ENCODE measurements at regions of chr18 and their contacts with region 1.

Region 1: GRCh38 chr18:44733069-44733753 is 52.5 kb downstream of the SETBP1 start:
- DNase-seq: no peak
- H3K4me3 Mint-ChIP-seq: peak overlapping the region; percentile 26
- H3K27ac Mint-ChIP-seq: peak overlapping the region; percentile 67
- H3K4me1 Mint-ChIP-seq: peaks cover 81% of the 10 kb centered on the region
- H3K27me3 Mint-ChIP-seq: no peaks in the 10 kb centered on the region

Region 2: DNA sequence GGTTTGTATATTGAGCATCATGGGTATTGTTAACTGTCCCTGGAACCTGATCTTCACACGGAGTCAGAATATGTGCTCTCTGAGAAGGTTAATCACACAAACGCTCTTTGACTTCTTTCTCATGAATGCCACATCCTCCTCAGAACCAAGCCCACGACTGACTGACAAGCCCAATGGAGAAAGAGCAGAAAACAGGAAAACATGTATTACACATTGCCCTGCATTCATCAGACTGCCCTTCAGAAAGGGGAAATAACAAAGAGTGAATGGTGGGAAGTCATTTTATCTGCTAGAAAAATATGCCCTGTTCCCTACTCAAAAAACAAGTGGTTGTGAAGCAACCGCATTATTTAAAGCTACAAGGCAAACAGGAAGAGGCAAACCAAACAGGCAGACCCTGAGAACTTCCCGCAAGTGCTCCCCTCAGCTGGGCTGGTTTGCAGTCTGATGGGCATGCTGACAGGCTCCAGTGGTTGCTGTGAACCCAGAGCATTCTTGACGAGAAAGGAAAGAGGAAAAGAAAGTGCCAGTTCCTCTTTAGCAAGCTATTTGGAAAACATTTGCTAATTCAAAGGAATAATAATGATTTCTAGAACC is 225.4 kb before region 1 on chr18:
- intact Hi-C with region 1: loop called (anchors 5 kb)
- DNase-seq: no peak
- H3K4me3 Mint-ChIP-seq: no peak overlapping the region
- H3K27ac Mint-ChIP-seq: no peak overlapping the region
- H3K4me1 Mint-ChIP-seq: no peaks in the 10 kb centered on the region
- H3K27me3 Mint-ChIP-seq: no peaks in the 10 kb centered on the region

Region 3: DNA sequence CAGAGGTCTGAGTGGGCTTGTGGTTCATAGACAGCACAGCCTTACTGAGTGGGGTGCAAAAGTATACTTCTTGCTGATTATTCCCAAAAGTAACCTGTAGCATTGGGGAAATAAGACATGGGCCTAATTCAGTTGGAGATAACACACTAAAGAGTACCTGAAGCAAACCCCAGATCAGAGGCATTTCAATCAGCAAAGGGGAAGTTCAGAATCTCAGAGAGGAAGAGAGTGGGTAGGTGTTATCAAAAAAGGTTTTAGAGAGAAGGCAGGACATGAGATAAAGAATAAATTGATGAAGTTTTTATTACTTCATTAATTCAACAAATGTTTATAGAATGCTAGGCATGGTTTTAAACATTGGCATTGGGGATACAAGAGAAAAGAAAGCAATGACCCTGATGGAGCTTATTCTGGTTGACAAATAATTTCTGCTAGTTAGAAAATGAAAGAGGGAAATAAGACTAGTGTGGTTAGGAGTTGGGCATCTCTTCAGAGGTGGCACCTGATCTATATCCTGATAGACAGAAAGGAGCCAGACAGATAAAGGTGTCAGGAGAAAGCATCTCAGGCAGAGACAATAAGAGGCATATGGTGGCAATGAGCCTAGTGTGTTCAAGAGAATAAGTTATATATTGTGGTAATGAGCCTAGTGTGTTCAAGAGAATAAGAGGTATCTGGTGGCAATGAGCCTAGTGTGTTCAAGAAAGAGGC is 206.4 kb before region 1 on chr18:
- intact Hi-C with region 1: no loop called
- DNase-seq: no peak
- H3K4me3 Mint-ChIP-seq: no peak overlapping the region
- H3K27ac Mint-ChIP-seq: no peak overlapping the region
- H3K4me1 Mint-ChIP-seq: no peaks in the 10 kb centered on the region
- H3K27me3 Mint-ChIP-seq: no peaks in the 10 kb centered on the region

Region 4: GRCh38 chr18:44537521-44537920 is 195.7 kb before region 1 on chr18:
- intact Hi-C with region 1: no loop called
- DNase-seq: no peak
- H3K4me3 Mint-ChIP-seq: no peak overlapping the region
- H3K27ac Mint-ChIP-seq: no peak overlapping the region
- H3K4me1 Mint-ChIP-seq: no peaks in the 10 kb centered on the region
- H3K27me3 Mint-ChIP-seq: peaks cover 1% of the 10 kb centered on the region

Region 5: DNA sequence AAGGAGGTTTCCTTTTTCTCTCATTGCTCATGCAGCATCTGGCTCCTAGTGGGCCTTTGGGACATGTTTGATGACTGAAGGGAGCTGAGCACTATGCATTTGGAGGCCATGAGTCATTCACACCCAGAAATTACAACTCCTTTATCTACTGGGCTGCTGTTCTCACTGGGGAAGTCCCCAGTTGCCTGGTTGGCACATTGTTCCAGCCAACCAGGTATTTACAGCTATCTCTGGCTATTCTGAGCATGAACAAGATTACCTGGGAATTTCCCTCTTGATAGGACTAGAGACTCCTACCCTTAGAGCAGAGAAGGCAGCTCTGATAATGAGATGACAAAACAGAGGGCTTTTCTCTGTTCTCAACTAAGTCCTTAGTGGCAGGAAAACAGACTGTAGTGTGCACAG is 154.0 kb after region 1 on chr18:
- intact Hi-C with region 1: loop called (anchors 1 kb)
- DNase-seq: peak; percentile 11
- H3K4me3 Mint-ChIP-seq: peak overlapping the region; percentile 57
- H3K27ac Mint-ChIP-seq: peak overlapping the region; percentile 99
- H3K4me1 Mint-ChIP-seq: peaks cover 35% of the 10 kb centered on the region
- H3K27me3 Mint-ChIP-seq: no peaks in the 10 kb centered on the region

Region 6: GRCh38 chr18:44895176-44895798 is 162.1 kb after region 1 on chr18:
- intact Hi-C with region 1: loop called (anchors 1 kb)
- DNase-seq: peak; percentile 10
- H3K4me3 Mint-ChIP-seq: no peak overlapping the region
- H3K27ac Mint-ChIP-seq: peak overlapping the region; percentile 20
- H3K4me1 Mint-ChIP-seq: peaks cover 49% of the 10 kb centered on the region
- H3K27me3 Mint-ChIP-seq: no peaks in the 10 kb centered on the region